Cardiac septum (tissue), 1 donor: ENCODE measurements at regions of chr1 and their contacts with region 1.

Region 1: GRCh38 chr1:19918057-19918456 is 5.4 kb downstream of the PLA2G2E start:
- DNase-seq: no peak

Region 2: GRCh38 chr1:19651141-19651737 is 266.8 kb before region 1 on chr1:
- intact Hi-C with region 1: no loop called
- DNase-seq: no peak

Region 3: DNA sequence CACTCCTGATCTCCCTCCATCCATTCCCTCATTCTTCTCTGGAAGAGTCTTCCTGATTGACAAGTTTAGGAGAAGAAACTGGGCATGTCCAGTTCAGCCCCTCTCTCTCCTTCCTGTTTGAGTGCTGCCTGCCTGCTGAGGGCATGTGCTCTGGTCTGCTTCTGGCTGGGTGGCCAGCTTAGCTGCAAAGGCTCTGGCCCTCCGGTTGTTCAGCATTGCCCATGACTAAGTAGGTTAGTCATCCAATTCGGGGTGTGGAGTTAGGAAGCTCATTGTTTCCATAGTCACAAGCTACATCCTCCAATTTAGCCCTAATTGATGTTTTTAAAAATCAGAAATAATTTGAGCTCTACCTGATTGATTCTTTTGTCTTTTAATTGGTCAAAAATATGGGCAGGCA is 31.0 kb after region 1 on chr1:
- intact Hi-C with region 1: no loop called
- DNase-seq: no peak

Region 4: DNA sequence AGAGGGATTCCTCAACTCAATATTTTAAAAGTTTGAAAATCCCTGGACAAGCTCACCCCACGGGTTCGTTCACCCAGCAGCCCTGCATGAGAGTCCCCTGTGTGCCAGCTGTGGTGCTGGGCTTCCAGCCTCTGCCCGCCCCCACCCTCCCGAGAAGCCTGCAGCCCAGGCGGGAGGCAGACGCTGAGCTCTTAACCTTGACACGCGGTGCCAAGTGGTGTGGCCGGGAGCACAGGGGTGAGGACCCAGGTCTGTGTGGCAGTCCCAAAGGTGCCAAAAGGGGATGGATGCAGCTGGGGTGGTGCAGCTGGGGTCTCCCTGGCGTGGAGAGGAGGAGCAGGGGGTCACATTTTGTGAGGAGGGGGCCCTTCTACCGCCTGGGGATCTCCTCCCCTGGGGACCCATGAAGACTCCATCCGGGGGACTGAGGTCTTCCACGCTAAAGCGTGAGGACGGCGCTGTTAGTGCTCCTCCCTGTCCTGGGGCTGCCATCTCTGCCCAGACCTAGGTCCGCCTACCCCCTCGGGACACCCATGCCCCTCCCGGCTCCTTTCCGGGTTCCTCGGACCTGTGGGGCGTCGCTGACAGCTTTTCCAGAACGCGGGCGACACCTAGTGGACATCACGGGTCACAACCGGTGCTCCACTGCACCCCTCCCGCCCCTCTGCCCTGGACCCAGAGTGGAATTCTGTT is 234.0 kb after region 1 on chr1:
- intact Hi-C with region 1: loop called (anchors 1 kb)
- DNase-seq: peak; percentile 89

Region 5: GRCh38 chr1:20194757-20195461 is 276.9 kb after region 1 on chr1:
- intact Hi-C with region 1: loop called (anchors 5 kb)
- DNase-seq: peak; percentile 81